Heart right ventricle (tissue), 16 donors: ENCODE measurements at regions of chr11 and their contacts with region 1.

Region 1: GRCh38 chr11:102451681-102452460 is 694 bp downstream of the TMEM123 start:
- DNase-seq: peak; percentile 58 to 66
- ATAC-seq: peak; percentile 68 to 90 (median 84)
- H3K4me3 ChIP-seq: peak overlapping the region; percentile 78 to 99 (median 88)
- H3K27ac ChIP-seq: peak overlapping the region; percentile 57 to 92 (median 88)
- H3K4me1 ChIP-seq: peaks cover 0 to 62% (median 30%) of the 10 kb centered on the region in 9 donors
- H3K27me3 ChIP-seq: no peaks in the 10 kb centered on the region
- CTCF ChIP-seq: peak in 3 of 9 donors; percentile 29 to 38 (median 37)

Region 2: GRCh38 chr11:102346748-102347461 is 105.0 kb before region 1 on chr11 and contains the start of gene BIRC2:
- intact Hi-C with region 1: loop called in 3 of 10 experiments (anchors 1 to 5 kb)
- DNase-seq: peak; percentile 93 to 97
- ATAC-seq: peak; percentile 97 to 99 (median 98)
- H3K4me3 ChIP-seq: peak within 1 kb of the TSS; percentile 55 to 94 (median 86)
- H3K27ac ChIP-seq: peak within 1 kb of the TSS; percentile 93 to 99 (median 98)
- H3K4me1 ChIP-seq: peaks cover 0 to 38% (median 32%) of the 10 kb centered on the region in 9 donors
- H3K27me3 ChIP-seq: no peaks in the 10 kb centered on the region
- CTCF ChIP-seq: peak; percentile 34 to 87 (median 81)
- total RNA-seq, gene BIRC2: 25.4 to 39.7 (median 28.6) TPM

Region 3: GRCh38 chr11:102384419-102385079 is 67.3 kb before region 1 on chr11:
- intact Hi-C with region 1: loop called in 2 of 10 experiments (anchors 5 to 10 kb)
- DNase-seq: peak; percentile 36 to 48
- ATAC-seq: peak; percentile 73 to 89 (median 82)
- H3K4me3 ChIP-seq: no peak overlapping the region
- H3K27ac ChIP-seq: peak overlapping the region in 6 of 10 donors; percentile 6 to 47 (median 32)
- H3K4me1 ChIP-seq: peaks cover 0 to 34% (median 16%) of the 10 kb centered on the region in 9 donors
- H3K27me3 ChIP-seq: no peaks in the 10 kb centered on the region
- CTCF ChIP-seq: no peak

Region 4: GRCh38 chr11:102390667-102391465 is 61.0 kb before region 1 on chr11:
- intact Hi-C with region 1: loop called in 4 of 10 experiments (anchors 5 to 10 kb)
- DNase-seq: peak; percentile 44 to 57
- ATAC-seq: peak; percentile 76 to 88 (median 86)
- H3K4me3 ChIP-seq: no peak overlapping the region
- H3K27ac ChIP-seq: no peak overlapping the region
- H3K4me1 ChIP-seq: peaks cover 0 to 5% (median 0%) of the 10 kb centered on the region in 9 donors
- H3K27me3 ChIP-seq: no peaks in the 10 kb centered on the region
- CTCF ChIP-seq: peak; percentile 71 to 87 (median 83)

Region 5: DNA sequence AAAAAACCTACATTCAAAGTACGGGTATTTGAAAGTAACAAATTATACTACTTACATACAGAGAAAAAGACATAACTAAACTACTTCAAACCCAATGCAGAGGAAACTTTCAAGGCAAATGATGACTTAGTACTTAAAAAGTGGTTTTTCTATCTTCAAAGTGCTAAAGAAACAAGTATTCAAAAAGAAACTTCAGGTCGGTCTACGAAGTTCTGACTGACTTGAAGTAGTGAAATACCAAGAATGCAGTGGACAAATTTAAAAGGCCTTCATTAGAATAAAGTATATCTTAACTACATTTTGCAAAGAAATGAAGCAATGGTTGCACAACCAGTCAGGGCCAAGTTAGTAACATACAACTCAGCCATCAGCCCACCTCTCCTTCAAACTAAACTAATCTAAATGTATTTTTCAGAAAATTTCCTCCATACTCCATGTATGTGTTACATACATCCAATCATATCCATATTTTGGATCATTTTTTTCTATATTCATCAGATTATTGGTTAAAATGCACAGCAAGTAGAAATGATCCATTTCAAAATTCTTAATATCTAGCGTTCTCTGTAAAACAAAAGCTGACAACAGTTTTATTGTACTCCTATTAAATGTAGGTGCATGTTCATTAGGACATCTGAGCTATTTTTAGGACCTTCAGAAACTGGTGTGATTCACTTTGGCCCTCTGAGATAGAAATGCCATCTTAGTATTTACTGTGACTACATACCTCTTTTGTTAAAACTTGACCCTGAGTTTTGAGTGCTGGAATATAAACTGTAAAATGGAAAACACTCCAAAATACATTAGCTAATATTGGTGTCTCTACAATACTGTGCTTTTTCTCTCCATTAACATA is 54.9 kb before region 1 on chr11:
- intact Hi-C with region 1: loop called in 3 of 10 experiments (anchors 5 kb)
- DNase-seq: no peak
- ATAC-seq: peak in 1 of 8 donors; percentile 39
- H3K4me3 ChIP-seq: no peak overlapping the region
- H3K27ac ChIP-seq: no peak overlapping the region
- H3K4me1 ChIP-seq: peaks cover 0 to 11% (median 4%) of the 10 kb centered on the region in 9 donors
- H3K27me3 ChIP-seq: no peaks in the 10 kb centered on the region
- CTCF ChIP-seq: no peak

Region 6: DNA sequence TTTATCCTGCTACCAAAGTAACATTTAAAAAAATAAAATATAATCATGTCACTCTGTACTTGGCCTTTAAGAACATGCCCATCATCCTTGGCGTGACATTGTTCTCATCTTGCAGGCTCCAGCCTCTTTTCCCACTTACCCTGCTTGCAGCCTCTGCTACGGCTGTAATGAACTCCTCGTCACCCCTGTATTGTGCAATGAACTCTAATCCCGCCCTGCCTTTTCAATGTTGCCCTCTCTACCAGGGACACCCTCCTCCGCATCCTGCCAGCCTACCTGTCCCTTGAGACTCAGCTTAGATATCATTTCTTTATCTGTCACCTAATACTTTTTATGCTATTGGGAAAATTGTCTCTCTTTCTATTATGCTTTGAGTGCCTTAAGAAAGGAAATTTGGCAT is 185.9 kb after region 1 on chr11:
- intact Hi-C with region 1: no loop called
- DNase-seq: no peak
- ATAC-seq: no peak
- H3K4me3 ChIP-seq: no peak overlapping the region
- H3K27ac ChIP-seq: no peak overlapping the region
- H3K4me1 ChIP-seq: no peaks in the 10 kb centered on the region
- H3K27me3 ChIP-seq: no peaks in the 10 kb centered on the region
- CTCF ChIP-seq: no peak